Prostate gland (tissue), 2 donors: ENCODE measurements at regions of chr19 and their contacts with region 1.

Region 1: GRCh38 chr19:39671738-39672363 is 16.1 kb downstream of the LGALS16 start:
- DNase-seq: peak; percentile 65
- H3K4me3 ChIP-seq: no peak overlapping the region
- H3K27ac ChIP-seq: no peak overlapping the region
- H3K4me1 ChIP-seq: no peaks in the 10 kb centered on the region
- H3K27me3 ChIP-seq: no peaks in the 10 kb centered on the region
- CTCF ChIP-seq: peak; percentile 12 to 80 (median 72)
- POLR2A ChIP-seq: no peak

Region 2: DNA sequence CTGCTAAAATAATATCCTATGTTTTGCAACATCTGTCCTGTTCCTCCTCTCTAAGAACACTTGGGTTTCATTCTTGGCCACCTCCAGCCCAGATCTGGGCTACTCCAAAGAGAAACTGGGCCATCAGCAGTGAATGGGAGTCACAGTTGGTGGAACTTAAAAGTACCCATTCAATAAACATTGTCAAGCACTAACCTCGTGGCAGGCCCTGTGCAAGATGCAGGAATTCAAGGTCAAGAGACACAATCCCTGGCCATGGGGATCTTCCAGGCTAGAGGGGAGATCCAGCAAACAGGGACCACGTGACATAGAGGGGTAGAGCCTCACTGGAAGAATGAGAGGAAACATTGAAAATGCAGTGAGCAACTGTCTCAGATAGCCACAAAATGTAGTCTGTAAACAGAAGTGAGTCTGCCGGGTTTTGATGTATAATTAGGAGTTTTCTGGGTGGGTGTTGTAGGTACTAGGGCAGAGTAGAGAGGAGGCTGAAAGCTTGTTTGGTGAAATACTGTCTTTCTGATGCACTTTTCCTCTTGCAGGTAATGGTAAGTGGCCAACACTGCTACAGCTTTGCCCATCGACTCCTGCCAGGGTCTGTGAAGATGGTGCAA is 117.0 kb before region 1 on chr19:
- intact Hi-C with region 1: loop called (anchors 5 kb)
- DNase-seq: no peak
- H3K4me3 ChIP-seq: no peak overlapping the region
- H3K27ac ChIP-seq: no peak overlapping the region
- H3K4me1 ChIP-seq: no peaks in the 10 kb centered on the region
- H3K27me3 ChIP-seq: no peaks in the 10 kb centered on the region
- CTCF ChIP-seq: no peak
- POLR2A ChIP-seq: no peak

Region 3: GRCh38 chr19:39805104-39805503 is 133.3 kb after region 1 on chr19:
- intact Hi-C with region 1: no loop called
- DNase-seq: no peak
- H3K4me3 ChIP-seq: no peak overlapping the region
- H3K27ac ChIP-seq: no peak overlapping the region
- H3K4me1 ChIP-seq: no peaks in the 10 kb centered on the region
- H3K27me3 ChIP-seq: no peaks in the 10 kb centered on the region
- CTCF ChIP-seq: no peak
- POLR2A ChIP-seq: no peak